ENCODE measurements at regions of chr5 and their contacts with region 1.

Region 1: DNA sequence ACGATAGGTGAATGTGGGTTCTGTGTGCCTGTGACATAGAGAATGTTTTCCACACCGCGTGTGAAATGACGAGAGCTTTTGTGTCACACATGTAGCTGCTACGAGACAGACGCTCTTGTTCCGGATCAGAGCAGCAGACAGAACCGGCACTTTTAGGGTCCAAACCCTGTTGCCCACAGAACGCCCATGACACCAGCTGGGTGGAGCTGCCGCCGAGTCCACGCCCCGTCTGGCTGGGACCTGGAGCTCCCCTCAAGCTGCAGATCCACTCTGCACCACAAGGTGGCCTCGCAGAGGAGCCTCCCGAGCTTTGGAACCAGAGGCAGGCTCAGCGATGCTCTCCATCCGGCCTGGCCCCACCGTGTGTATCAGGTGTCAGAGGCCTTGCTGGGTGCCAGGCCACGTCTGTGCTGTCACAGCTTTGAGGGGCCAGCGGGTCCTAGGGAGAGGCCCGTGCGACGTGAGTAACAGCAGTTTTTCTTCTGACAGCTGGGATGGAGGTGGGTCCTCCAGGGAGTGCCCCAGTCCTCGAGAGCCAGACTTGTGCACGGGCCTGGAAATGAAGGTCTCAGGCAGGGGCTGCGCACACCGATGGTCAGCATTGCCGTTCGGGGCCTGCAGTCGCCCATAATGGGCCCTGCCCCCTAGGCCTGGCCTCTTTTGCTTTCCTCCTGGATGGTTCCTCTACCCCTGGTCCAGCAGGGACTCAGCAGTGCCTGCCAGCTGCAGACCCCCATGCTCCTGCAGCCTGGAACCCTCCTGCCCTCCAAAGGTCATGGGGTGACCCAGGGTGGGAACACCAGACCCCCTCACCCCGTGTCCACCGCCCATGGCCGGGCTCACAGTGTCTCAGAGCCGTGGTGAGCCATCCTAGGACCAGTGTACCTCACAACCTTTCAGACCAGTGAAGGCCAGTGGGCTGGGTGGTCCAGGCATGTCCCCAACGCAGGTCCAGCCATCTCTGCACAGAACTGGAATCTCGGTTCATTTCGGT is 2.5 kb upstream of the LRRC14B start:
- DNase-seq: peak; percentile 93

Region 2: GRCh38 chr5:217860-218456 is 29.2 kb after region 1 on chr5 and contains the starts of genes CCDC127 and SDHA:
- CTCF ChIA-PET with region 1: interaction called, 4 read pairs
- POLR2A ChIA-PET with region 1: interaction called, 16 read pairs
- DNase-seq: peak; percentile 99

Region 3: DNA sequence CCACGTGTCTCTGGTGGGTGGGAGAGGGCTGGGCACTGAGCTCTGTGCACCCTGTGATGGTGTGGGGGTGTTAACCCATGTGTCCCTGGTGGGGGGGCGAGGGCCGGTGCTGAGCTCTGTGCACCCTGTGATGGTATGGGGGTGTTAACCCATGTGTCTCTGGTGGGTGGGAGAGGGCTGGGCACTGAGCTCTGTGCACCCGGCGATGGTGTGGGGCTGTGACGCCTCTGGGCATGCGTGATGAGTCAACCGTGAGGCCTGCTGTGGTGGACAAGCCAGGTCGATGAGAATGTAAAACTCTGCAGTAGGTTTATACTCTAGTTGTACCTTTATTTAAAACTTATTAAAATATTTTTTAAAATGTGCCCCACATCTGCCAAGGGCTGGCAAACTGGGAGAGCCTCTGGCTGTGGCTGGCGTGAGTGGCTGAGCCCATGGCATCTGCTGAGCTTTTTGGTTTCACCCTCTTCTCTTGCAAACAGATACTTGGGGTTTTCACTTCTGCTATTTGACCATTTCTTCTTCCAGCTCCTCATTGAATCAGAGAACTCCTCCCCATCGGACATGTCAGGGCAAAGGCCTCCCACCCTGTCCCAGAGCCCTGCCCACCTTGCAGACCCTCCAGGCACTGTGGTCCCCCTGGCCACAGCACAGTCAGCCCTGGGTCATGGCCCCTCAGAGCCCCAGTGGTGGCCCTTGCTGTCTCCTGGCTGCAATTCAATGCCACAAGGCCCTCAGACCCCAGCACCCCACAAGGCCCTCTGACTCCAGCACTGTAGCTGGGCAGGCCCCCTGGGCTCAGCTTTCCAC is 235.7 kb after region 1 on chr5:
- CTCF ChIA-PET with region 1: no interaction called
- POLR2A ChIA-PET with region 1: no interaction called
- DNase-seq: no peak